ENCODE measurements at regions of chr9 and their contacts with region 1.

Region 1: DNA sequence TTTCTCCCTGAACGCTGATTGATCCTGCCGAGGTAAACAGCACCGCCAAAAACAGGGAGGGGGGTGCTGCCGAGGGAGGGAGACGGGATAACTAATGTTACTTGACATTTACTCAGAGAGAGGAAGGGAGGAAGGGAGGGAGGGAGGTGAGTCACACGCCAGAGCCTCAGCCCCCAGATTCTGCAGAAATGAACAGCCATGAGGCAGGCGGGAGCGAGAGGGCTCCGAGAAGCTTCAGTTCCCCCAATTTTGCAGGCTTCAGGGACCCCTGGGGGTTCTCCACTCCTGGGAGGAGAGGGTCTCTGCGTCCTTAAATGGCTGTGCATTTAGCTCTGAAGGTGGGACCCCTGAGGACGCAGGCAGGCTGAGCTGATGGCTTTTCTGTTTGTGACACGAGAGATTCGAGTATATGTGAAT is 59.1 kb upstream of the IER5L start:
- DNase-seq: peak in 8 of 9 experiments; percentile 36 to 79 (median 66)
- ATAC-seq: peak; percentile 70
- H3K4me3 ChIP-seq: peak overlapping the region; percentile 51 to 66
- H3K4me3 Mint-ChIP-seq: peak overlapping the region; percentile 88
- H3K27ac ChIP-seq: peak overlapping the region; percentile 56 to 62
- H3K27ac Mint-ChIP-seq: peak overlapping the region; percentile 94
- H3K4me1 ChIP-seq: peaks cover 50% of the 10 kb centered on the region
- H3K4me1 Mint-ChIP-seq: peaks cover 70% of the 10 kb centered on the region
- H3K27me3 ChIP-seq: no peaks in the 10 kb centered on the region
- H3K27me3 Mint-ChIP-seq: no peaks in the 10 kb centered on the region
- CTCF ChIP-seq: no peak

Region 2: DNA sequence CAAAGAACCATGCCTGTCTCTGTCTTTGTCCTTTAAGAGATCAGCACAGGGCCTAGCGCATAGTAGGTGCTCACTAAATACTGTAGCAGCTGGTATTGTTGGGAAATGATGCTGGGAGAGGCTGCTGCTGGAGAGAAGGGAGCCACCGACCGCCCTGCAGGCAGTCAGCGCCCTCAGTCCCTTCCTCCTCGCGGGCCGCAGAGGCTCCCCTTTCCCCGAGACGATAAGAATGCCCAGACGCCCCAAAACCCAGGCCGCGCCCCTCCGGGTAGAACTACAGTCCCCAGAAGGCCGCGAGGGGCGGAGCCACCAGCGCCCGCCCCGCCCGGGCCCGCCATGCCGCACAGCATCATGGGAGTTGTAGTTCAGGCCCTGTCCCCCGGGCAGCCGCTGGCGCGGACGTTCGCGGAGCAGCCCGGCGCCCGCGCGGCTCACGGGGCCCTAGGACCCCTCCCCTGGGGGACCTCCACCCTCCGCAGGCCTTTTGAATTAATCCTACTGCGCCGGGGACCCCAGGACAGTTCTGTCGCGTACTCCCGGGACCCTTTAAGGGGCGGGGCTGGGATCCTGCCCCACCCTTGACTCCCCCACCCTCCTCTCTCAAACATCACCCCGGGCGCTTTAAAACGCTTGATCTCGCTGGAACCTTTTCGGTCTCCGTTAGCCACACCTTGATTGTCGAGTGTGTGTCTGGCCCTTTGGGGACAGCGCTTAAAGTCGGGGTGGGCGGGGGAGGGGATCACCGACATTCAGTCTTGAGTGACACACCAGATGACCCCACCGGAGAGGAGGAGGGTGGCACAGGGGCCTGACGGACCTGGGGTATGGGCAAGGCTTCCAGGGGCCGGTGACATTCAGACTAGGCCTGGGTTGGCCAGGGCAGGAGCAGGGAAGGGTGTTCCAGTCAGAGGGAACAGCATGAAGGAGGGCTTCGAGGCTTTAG is 34.3 kb before region 1 on chr9:
- CTCF ChIA-PET with region 1: interaction called, 3 read pairs
- POLR2A ChIA-PET with region 1: interaction called, 7 read pairs
- intact Hi-C with region 1: loop called (anchors 1 to 2 kb)
- DNase-seq: peak; percentile 84 to 96 (median 90)
- ATAC-seq: peak; percentile 93
- H3K4me3 ChIP-seq: peak overlapping the region; percentile 56 to 95
- H3K4me3 Mint-ChIP-seq: peak overlapping the region; percentile 78
- H3K27ac ChIP-seq: peak overlapping the region; percentile 62 to 65
- H3K27ac Mint-ChIP-seq: peak overlapping the region; percentile 79
- H3K4me1 ChIP-seq: peaks cover 30% of the 10 kb centered on the region
- H3K4me1 Mint-ChIP-seq: peaks cover 28% of the 10 kb centered on the region
- H3K27me3 ChIP-seq: no peaks in the 10 kb centered on the region
- H3K27me3 Mint-ChIP-seq: no peaks in the 10 kb centered on the region
- CTCF ChIP-seq: no peak

Region 3: GRCh38 chr9:129208207-129209032 is 28.8 kb before region 1 on chr9:
- CTCF ChIA-PET with region 1: interaction called, 3 read pairs
- POLR2A ChIA-PET with region 1: interaction called, 7 read pairs
- intact Hi-C with region 1: loop called (anchors 1 to 2 kb)
- DNase-seq: peak in 8 of 9 experiments; percentile 45 to 77 (median 61)
- ATAC-seq: peak; percentile 72
- H3K4me3 ChIP-seq: peak overlapping the region; percentile 18 to 50
- H3K4me3 Mint-ChIP-seq: peak overlapping the region; percentile 86
- H3K27ac ChIP-seq: peak overlapping the region; percentile 38 to 57
- H3K27ac Mint-ChIP-seq: peak overlapping the region; percentile 83
- H3K4me1 ChIP-seq: peaks cover 48% of the 10 kb centered on the region
- H3K4me1 Mint-ChIP-seq: peaks cover 49% of the 10 kb centered on the region
- H3K27me3 ChIP-seq: no peaks in the 10 kb centered on the region
- H3K27me3 Mint-ChIP-seq: no peaks in the 10 kb centered on the region
- CTCF ChIP-seq: no peak

Region 4: DNA sequence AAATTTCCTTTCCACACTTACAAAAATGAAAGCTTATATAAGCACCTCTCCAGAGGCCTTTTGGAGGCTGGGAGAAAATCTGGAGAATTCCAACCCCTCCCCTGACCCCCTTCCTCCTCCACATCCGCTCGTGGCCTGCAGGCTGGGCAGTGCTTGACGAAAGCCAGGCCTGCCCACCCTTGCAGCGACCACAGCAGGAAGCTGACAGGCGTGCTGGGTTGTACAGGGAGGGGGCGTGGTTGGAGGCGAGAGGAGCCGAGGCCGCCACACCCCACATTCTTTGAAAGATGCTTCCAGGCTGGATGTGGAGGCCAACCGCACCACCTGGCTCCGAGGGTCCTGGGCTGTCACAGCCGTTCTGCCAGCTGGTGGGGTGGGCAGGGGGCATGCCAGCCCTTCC is 11.4 kb before region 1 on chr9:
- CTCF ChIA-PET with region 1: interaction called, 5 read pairs
- POLR2A ChIA-PET with region 1: interaction called, 28 read pairs
- intact Hi-C with region 1: loop called in 1 of 2 experiments (anchors 1 kb)
- DNase-seq: peak in 8 of 9 experiments; percentile 46 to 79 (median 62)
- ATAC-seq: peak; percentile 75
- H3K4me3 ChIP-seq: no peak overlapping the region
- H3K4me3 Mint-ChIP-seq: peak overlapping the region; percentile 50
- H3K27ac ChIP-seq: peak overlapping the region in 1 of 2 experiments; percentile 50
- H3K27ac Mint-ChIP-seq: peak overlapping the region; percentile 82
- H3K4me1 ChIP-seq: peaks cover 34% of the 10 kb centered on the region
- H3K4me1 Mint-ChIP-seq: peaks cover 42% of the 10 kb centered on the region
- H3K27me3 ChIP-seq: no peaks in the 10 kb centered on the region
- H3K27me3 Mint-ChIP-seq: no peaks in the 10 kb centered on the region
- CTCF ChIP-seq: no peak

Region 5: GRCh38 chr9:129258124-129258822 is 21.1 kb after region 1 on chr9:
- CTCF ChIA-PET with region 1: interaction called, 6 read pairs
- POLR2A ChIA-PET with region 1: interaction called, 4 read pairs
- intact Hi-C with region 1: loop called (anchors 1 to 2 kb)
- DNase-seq: peak; percentile 77 to 96 (median 89)
- ATAC-seq: peak; percentile 88
- H3K4me3 ChIP-seq: peak overlapping the region; percentile 38 to 42
- H3K4me3 Mint-ChIP-seq: peak overlapping the region; percentile 75
- H3K27ac ChIP-seq: no peak overlapping the region
- H3K27ac Mint-ChIP-seq: no peak overlapping the region
- H3K4me1 ChIP-seq: peaks cover 24% of the 10 kb centered on the region
- H3K4me1 Mint-ChIP-seq: peaks cover 23% of the 10 kb centered on the region
- H3K27me3 ChIP-seq: peaks cover 0 to 3% of the 10 kb centered on the region in 2 experiments
- H3K27me3 Mint-ChIP-seq: peaks cover 5% of the 10 kb centered on the region
- CTCF ChIP-seq: no peak

Region 6: GRCh38 chr9:129270903-129271431 is 33.8 kb after region 1 on chr9:
- CTCF ChIA-PET with region 1: interaction called, 4 read pairs
- POLR2A ChIA-PET with region 1: no interaction called
- intact Hi-C with region 1: loop called in 1 of 2 experiments (anchors 5 kb)
- DNase-seq: peak in 2 of 9 experiments; percentile 23 to 64
- ATAC-seq: peak; percentile 55
- H3K4me3 ChIP-seq: peak overlapping the region; percentile 10 to 16
- H3K4me3 Mint-ChIP-seq: peak overlapping the region; percentile 76
- H3K27ac ChIP-seq: peak overlapping the region in 1 of 2 experiments; percentile 43
- H3K27ac Mint-ChIP-seq: peak overlapping the region; percentile 70
- H3K4me1 ChIP-seq: peaks cover 22% of the 10 kb centered on the region
- H3K4me1 Mint-ChIP-seq: peaks cover 31% of the 10 kb centered on the region
- H3K27me3 ChIP-seq: no peaks in the 10 kb centered on the region
- H3K27me3 Mint-ChIP-seq: no peaks in the 10 kb centered on the region
- CTCF ChIP-seq: no peak

Region 7: DNA sequence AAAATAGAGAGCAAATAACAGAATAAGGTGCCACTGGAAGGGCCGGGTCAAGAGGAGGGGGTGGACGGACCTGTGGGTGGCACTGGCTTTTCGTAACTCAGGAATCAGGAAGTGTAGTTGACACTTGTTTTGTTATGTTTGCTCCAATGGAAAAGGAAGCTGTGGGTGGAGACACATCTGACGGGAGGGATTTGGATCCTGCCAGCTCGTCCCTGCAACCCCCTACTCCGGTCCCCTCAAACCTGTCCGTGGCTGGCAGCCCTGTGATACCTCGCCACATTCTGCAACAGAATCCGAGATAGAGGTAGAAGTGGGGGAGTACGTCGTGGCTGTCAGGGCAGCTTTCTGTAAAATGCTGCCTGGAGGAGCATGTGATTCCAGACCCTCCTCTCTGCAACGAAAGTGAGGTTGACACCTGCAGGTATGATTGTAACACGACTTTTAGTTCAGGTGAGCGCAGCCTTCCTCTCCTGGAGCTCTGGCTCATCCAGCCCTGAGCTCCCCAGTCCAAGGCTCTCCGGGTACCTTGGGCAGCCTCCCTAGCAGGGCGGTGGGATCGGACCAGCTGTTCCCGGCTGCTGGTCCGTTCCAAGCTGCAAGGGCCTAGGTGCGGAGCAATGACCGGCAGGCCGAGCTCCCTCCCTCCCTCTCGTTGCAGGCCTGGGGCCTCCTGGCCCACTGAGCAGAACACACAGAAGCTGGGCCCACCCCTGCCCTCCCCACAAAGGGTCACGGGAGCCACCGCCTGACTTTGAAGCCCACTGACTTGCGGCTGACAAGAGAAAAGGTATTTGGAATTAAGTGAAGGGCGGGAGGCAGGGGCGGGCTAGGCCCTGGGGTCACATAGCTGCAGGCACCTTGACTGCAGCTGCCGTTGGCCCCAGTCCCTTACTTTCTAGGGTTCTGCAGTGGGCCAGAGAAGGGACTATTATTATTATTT is 45.3 kb after region 1 on chr9:
- CTCF ChIA-PET with region 1: no interaction called
- POLR2A ChIA-PET with region 1: no interaction called
- intact Hi-C with region 1: no loop called
- DNase-seq: no peak
- ATAC-seq: no peak
- H3K4me3 ChIP-seq: no peak overlapping the region
- H3K4me3 Mint-ChIP-seq: no peak overlapping the region
- H3K27ac ChIP-seq: no peak overlapping the region
- H3K27ac Mint-ChIP-seq: no peak overlapping the region
- H3K4me1 ChIP-seq: no peaks in the 10 kb centered on the region
- H3K4me1 Mint-ChIP-seq: no peaks in the 10 kb centered on the region
- H3K27me3 ChIP-seq: no peaks in the 10 kb centered on the region
- H3K27me3 Mint-ChIP-seq: no peaks in the 10 kb centered on the region
- CTCF ChIP-seq: no peak

Region 8: DNA sequence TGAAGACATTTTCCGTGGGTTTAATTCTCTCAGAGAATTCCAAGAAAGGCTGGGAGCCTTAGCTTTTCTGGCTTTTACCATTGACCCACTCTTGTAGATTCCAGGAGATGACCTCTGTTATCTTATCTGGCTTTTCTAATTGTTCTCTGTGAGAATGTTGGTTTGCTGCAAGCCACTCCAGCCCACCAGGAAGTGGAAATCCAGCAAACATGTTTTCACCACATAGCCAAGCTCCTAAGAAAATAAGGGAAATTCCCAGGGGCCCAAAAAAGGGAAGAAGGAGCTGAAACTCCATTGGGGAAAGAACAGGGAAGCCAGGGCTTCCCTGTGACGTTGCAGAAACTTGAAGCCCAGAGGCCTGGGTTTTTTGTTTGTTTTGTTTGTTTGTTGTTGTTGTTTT is 836.2 kb after region 1 on chr9:
- CTCF ChIA-PET with region 1: no interaction called
- POLR2A ChIA-PET with region 1: no interaction called
- intact Hi-C with region 1: no loop called
- DNase-seq: peak in 1 of 9 experiments; percentile 13
- ATAC-seq: no peak
- H3K4me3 ChIP-seq: no peak overlapping the region
- H3K4me3 Mint-ChIP-seq: no peak overlapping the region
- H3K27ac ChIP-seq: no peak overlapping the region
- H3K27ac Mint-ChIP-seq: no peak overlapping the region
- H3K4me1 ChIP-seq: peaks cover 8% of the 10 kb centered on the region
- H3K4me1 Mint-ChIP-seq: peaks cover 32% of the 10 kb centered on the region
- H3K27me3 ChIP-seq: no peaks in the 10 kb centered on the region
- H3K27me3 Mint-ChIP-seq: no peaks in the 10 kb centered on the region
- CTCF ChIP-seq: no peak

Measured in CD8-positive, alpha-beta T cell (primary cell).